Mammary epithelial cell (primary cell): ENCODE measurements at regions of chr1 and their contacts with region 1.

Region 1: GRCh38 chr1:204354579-204354978 is 5.2 kb downstream of the PLEKHA6 start:
- DNase-seq: no peak
- H3K4me3 ChIP-seq: no peak overlapping the region
- H3K27ac ChIP-seq: no peak overlapping the region
- H3K4me1 ChIP-seq: no peaks in the 10 kb centered on the region
- H3K27me3 ChIP-seq: no peaks in the 10 kb centered on the region
- CTCF ChIP-seq: no peak

Region 2: DNA sequence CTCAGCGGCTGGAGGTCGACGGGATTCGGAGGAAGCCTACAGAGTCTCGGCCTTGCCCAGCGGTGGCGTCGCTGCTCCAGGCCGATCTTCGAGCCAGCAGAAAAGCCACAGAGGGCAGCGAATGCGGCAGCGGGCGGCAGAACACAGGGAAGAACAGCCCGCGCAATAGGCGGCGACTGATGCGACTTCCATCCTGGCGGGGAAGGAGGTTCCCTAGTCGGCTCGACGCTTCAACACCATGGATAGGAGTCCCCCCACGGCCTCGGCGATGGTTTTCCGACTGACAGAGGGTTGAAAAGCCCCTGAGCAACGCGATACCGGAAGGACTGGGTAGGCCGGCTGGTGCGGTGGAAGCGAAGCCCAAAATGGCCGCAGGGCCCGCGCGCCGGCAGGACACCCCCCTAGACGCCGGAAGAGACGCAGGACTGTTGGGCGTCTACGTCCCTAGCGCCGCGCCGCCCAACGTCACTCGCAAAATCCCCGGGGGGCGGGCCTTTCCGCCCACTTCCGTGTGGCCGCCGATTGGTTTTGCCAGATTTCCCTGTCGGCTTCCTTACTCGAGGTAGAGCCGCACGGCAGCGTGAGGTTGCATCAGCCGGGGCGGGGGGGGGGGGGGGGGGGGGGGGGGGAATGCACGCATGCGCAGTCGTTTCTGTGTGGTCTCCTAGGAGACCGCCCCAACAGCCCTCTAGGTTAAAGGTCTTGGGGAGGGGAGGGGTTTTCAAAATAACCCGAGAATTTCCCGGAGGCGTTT is 57.0 kb after region 1 on chr1 and contains the start of gene PPP1R15B:
- CTCF ChIA-PET with region 1: interaction called, 20 read pairs
- dilution Hi-C with region 1: no loop called
- in situ Hi-C with region 1: no loop called
- intact Hi-C with region 1: no loop called
- DNase-seq: peak; percentile 99
- H3K4me3 ChIP-seq: peak within 1 kb of the TSS; percentile 64 to 99 (median 85)
- H3K27ac ChIP-seq: peak within 1 kb of the TSS; percentile 99
- H3K4me1 ChIP-seq: peaks cover 13% of the 10 kb centered on the region
- H3K27me3 ChIP-seq: no peaks in the 10 kb centered on the region
- CTCF ChIP-seq: no peak
- total RNA-seq, gene PPP1R15B: 33.4 to 37.5 TPM